ENCODE measurements at regions of chr15 and their contacts with region 1.

Region 1: GRCh38 chr15:57205996-57206395 is 170.3 kb upstream of the CGNL1 start:
- DNase-seq: peak; percentile 59 to 99 (median 85)
- ATAC-seq: peak; percentile 78
- H3K4me3 ChIP-seq: no peak overlapping the region
- H3K4me1 ChIP-seq: peaks cover 14% of the 10 kb centered on the region
- CTCF ChIP-seq: no peak

Region 2: DNA sequence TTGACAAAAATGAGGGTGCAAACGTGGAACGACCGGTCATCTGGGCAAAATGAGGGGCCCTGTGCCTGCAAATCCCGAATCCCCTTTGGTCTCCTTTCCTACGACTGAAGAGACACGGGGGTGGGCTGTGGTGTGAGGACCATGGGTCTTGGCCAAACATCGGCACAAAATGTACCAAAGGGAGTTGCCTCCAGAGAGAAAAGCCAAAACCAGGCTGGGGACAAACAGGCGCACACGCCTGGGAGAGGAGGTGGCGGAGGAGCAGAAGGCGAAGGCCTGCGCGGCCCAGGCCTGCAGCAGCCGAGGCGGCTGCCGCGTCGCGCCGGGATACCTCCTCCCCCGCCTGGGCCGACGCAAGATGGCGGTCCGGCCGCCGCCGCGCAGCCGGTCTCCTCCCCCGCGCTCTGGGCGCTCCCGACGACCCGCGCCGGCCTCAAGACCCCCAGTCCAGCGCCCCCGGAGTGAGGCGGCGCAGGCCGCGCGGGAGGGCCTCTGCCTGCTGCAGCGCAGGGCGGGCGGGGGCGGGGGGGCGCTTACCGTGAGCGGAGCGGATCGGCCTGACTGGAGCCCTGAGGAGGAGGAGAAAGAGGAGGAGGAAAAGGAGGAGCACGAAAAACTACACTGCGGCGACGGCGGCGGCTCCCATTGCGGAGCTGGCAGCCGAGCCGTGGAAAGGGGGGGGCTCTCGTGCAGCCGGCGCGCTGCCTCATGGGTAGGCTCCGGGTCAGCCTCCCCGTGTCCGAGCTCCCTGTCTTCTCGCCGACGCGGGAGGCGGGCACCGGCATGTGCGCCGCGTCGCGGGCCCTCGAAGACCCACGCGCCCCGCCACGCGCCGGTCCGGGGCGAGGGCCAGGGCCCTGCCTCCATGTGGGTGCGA is 472.8 kb before region 1 on chr15 and contains the start of gene ZNF280D:
- intact Hi-C with region 1: loop called in 1 of 2 experiments (anchors 10 kb)
- DNase-seq: peak; percentile 92 to 94 (median 93)
- ATAC-seq: peak; percentile 95
- H3K4me3 ChIP-seq: peak within 1 kb of the TSS; percentile 54
- H3K4me1 ChIP-seq: peaks cover 27% of the 10 kb centered on the region
- CTCF ChIP-seq: no peak
- total RNA-seq, gene ZNF280D: 29.6 to 51.0 (median 39.8) TPM

Measured in mucosa of descending colon (tissue), 3 donors.